ENCODE measurements at regions of chr3 and their contacts with region 1.

Region 1: DNA sequence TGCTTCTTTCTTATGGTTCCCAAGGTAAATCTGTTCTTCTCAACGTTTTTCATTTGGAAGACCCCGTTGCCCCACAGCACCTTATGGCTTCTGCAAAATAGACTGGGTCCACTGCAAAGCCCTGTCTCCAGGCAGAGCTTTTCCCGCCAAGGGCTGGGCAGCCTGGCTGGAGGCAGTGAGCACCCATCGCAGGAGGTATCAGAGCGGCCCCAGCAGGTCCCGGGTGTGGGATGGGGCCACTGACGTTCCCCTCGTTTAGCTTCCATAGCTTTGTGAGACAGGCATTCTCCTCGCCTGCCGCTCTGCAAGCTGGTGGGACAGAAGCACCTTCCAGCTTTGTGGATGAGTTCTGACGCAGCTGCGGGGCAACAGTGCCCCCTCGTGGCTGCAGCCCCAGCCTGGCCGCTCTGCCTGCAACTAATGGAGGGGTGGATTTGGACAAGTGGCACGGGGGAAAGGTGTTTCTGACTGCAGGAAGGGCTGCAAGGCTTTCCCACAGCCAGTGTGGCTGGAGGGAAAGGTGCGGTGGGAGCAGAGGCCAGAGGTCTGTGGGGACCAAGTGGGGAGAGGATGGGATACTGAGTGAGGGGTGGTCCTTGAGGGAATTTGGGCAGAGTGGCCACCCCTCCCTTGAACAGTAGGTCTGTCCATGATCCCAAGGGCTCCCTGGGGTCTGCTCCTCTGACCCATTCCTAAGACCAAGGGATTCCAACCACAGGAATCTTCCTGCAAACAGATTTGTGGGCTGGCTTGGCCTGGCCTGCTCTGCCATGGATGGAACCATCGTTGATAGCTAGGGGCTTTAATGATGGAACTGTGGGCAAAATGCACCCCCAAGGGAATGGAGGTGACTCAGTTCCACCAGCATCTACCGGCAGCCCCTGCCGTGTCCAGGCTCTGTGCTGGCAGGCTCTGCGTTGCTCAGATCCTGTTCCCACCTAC is 99.4 kb downstream of the FBLN2 start:
- DNase-seq: peak; percentile 81 to 86
- ATAC-seq: peak; percentile 70 to 91 (median 86)
- H3K4me3 ChIP-seq: no peak overlapping the region
- H3K27ac ChIP-seq: no peak overlapping the region
- H3K4me1 ChIP-seq: peaks cover 0 to 21% (median 14%) of the 10 kb centered on the region in 9 donors
- H3K27me3 ChIP-seq: peaks cover 0 to 23% (median 12%) of the 10 kb centered on the region in 7 donors
- CTCF ChIP-seq: peak; percentile 94 to 99 (median 97)

Region 2: GRCh38 chr3:13091898-13092611 is 556.3 kb before region 1 on chr3:
- intact Hi-C with region 1: loop called (anchors 1 to 10 kb)
- DNase-seq: peak; percentile 86 to 89
- ATAC-seq: peak; percentile 75 to 89 (median 82)
- H3K4me3 ChIP-seq: peak overlapping the region in 5 of 10 donors; percentile 8 to 32 (median 13)
- H3K27ac ChIP-seq: peak overlapping the region in 6 of 10 donors; percentile 3 to 78 (median 37)
- H3K4me1 ChIP-seq: peaks cover 0 to 24% (median 15%) of the 10 kb centered on the region in 9 donors
- H3K27me3 ChIP-seq: no peaks in the 10 kb centered on the region
- CTCF ChIP-seq: peak; percentile 92 to 98 (median 97)

Region 3: DNA sequence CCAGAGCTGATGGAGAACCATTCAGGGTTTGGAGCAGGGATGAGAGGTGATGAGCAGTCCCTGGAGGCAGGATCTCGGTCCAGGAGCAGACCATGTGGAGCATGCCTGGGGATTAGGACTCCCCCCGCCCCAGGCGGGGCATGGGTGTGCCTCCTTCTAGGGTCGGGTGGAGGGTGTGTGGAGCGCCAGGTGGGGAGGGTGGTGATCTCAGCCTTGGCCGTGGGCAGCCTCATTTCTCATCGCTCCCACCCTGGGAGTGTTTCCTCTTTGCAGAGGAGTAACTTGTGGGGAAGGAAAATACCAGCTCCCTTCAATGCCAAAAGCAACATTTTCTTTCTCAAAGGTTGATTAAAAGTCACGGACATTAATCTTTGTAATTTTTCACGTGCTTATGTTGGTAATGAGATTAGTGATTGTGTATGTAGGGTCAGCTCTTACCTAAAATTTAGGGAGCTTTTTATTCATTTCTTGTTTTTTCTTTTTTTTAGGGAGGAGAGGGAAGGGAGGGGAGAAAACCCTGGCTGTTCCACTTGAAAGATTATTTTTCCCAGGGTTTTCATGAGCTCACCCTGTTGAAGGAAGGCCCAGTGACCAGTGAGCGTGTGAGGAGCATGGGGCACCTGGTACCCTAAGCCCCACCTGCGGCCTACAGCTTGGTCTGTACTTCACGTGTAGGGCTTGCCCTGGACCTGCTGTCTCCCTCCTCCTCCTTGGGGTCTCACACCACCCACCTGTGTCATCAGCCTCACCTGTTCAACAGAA is 88.4 kb before region 1 on chr3:
- intact Hi-C with region 1: loop called in 1 of 10 experiments (anchors 10 kb)
- DNase-seq: peak in 1 of 2 donors; percentile 50
- ATAC-seq: peak; percentile 58 to 81 (median 73)
- H3K4me3 ChIP-seq: no peak overlapping the region
- H3K27ac ChIP-seq: peak overlapping the region in 7 of 10 donors; percentile 30 to 78 (median 69)
- H3K4me1 ChIP-seq: peaks cover 1 to 83% (median 23%) of the 10 kb centered on the region in 9 donors
- H3K27me3 ChIP-seq: no peaks in the 10 kb centered on the region
- CTCF ChIP-seq: no peak

Region 4: GRCh38 chr3:13673209-13673608 is 24.9 kb after region 1 on chr3:
- intact Hi-C with region 1: no loop called
- DNase-seq: no peak
- ATAC-seq: no peak
- H3K4me3 ChIP-seq: no peak overlapping the region
- H3K27ac ChIP-seq: no peak overlapping the region
- H3K4me1 ChIP-seq: no peaks in the 10 kb centered on the region
- H3K27me3 ChIP-seq: peaks cover 0 to 74% (median 56%) of the 10 kb centered on the region in 7 donors
- CTCF ChIP-seq: peak in 1 of 9 donors; percentile 23

Region 5: DNA sequence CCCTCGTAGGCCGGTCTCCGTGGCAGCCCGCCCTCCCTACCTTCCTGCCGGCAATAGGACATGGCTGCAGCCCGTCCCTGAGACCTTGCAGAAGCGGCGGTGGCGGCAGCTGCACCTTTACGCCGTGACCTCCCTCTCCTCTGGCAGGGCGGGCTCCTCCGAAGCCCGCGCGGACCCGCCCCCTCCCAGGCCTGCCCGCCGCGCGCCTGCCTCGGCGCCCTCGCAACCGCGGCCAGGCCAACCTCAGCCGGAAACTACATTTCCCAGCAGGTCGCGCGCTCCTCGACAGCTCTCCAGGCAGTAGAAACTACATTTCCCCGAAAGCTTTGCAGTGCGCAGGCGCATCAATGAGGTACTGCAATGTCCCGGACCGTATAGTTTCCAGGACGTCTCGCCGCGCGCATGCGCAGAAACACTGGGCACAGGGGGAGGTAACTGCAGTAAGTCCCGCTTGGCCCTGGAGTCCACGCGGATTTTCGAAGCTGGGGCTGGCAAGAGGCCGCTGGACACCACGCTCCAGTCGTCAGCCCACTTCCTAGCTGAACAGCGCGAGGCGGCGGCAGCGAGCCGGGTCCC is 476.4 kb after region 1 on chr3 and contains the starts of genes CHCHD4 and TMEM43:
- intact Hi-C with region 1: loop called in 1 of 10 experiments (anchors 10 kb)
- DNase-seq: peak; percentile 99
- ATAC-seq: peak; percentile 91 to 97 (median 95)
- H3K4me3 ChIP-seq: peak within 1 kb of the TSS; percentile 68 to 98 (median 81)
- H3K27ac ChIP-seq: peak within 1 kb of the TSS; percentile 78 to 97 (median 93)
- H3K4me1 ChIP-seq: peaks cover 7 to 47% (median 41%) of the 10 kb centered on the region in 9 donors
- H3K27me3 ChIP-seq: no peaks in the 10 kb centered on the region
- CTCF ChIP-seq: no peak
- total RNA-seq, gene CHCHD4: 18.0 to 37.2 (median 28.0) TPM
- total RNA-seq, gene TMEM43: 23.9 to 47.4 (median 37.2) TPM

Region 6: DNA sequence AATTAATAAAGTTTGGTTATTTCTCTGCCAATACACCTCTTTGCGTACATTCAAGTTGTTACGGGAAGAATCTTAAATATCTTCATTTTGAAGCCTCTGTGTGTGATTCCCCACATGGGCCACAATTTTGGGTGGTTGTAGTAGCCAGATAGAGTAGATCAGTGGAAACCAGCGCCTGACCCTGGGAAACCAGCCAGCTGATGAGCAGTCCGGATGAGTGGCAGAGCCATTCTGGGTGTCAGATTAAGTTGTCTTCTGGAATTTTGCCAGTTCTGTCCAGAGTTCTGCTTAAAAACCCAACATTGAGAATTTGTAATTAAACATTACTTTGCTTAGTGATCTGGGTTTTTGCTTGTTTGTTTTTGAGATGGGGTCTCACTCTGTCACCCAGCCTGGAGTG is 1367.1 kb after region 1 on chr3:
- intact Hi-C with region 1: no loop called
- DNase-seq: no peak
- ATAC-seq: no peak
- H3K4me3 ChIP-seq: no peak overlapping the region
- H3K27ac ChIP-seq: no peak overlapping the region
- H3K4me1 ChIP-seq: peaks cover 0 to 12% (median 0%) of the 10 kb centered on the region in 9 donors
- H3K27me3 ChIP-seq: no peaks in the 10 kb centered on the region
- CTCF ChIP-seq: no peak

Measured in heart right ventricle (tissue), 16 donors.